ENCODE measurements at regions of chr14 and their contacts with region 1.

Region 1: GRCh38 chr14:85060121-85060520 is 469.8 kb upstream of the FLRT2 start:
- DNase-seq: no peak
- ATAC-seq: no peak
- H3K4me3 ChIP-seq: no peak overlapping the region
- H3K27ac ChIP-seq: no peak overlapping the region
- H3K4me1 ChIP-seq: no peaks in the 10 kb centered on the region
- H3K27me3 ChIP-seq: no peaks in the 10 kb centered on the region
- CTCF ChIP-seq: no peak

Region 2: GRCh38 chr14:84760461-84761126 is 299.5 kb before region 1 on chr14:
- intact Hi-C with region 1: loop called in 1 of 10 experiments (anchors 10 kb)
- DNase-seq: no peak
- ATAC-seq: no peak
- H3K4me3 ChIP-seq: no peak overlapping the region
- H3K27ac ChIP-seq: no peak overlapping the region
- H3K4me1 ChIP-seq: no peaks in the 10 kb centered on the region
- H3K27me3 ChIP-seq: no peaks in the 10 kb centered on the region
- CTCF ChIP-seq: no peak

Region 3: DNA sequence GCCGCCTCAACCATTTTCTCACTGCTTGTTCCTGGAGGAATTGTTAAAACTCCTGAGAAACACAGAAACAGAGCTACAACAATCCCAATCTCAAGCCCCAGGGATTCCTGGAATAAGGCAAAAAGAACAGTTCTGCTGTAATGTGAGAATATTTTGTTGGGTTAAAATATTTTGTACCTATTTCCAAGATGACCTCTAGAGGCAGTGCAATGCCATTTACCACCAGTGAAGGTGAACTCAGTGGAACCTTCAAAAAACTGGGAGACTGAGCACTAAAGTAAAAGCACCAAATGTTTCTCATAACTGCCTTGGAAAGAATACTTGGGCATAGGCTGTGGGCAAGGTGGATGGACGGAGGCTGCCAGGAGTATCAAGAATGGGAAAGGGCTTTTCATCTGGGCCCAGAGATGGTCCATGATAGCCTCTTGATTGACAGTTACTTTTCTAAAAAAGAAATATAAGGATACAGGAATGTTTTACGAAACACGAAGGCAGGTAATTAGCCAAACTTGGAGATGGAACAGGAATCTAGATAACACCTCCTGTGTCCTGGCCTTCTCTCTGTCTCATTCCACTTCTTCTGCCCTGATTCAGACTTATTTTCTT is 135.9 kb after region 1 on chr14:
- intact Hi-C with region 1: no loop called
- DNase-seq: no peak
- ATAC-seq: no peak
- H3K4me3 ChIP-seq: no peak overlapping the region
- H3K27ac ChIP-seq: no peak overlapping the region
- H3K4me1 ChIP-seq: no peaks in the 10 kb centered on the region
- H3K27me3 ChIP-seq: no peaks in the 10 kb centered on the region
- CTCF ChIP-seq: peak in 7 of 9 donors; percentile 30 to 57 (median 50)